ENCODE measurements at regions of chr10 and their contacts with region 1.

Region 1: GRCh38 chr10:50417886-50418830 is 166.8 kb upstream of the ASAH2 start:
- DNase-seq: peak; percentile 87
- H3K4me3 ChIP-seq: peak overlapping the region; percentile 45
- H3K4me3 Mint-ChIP-seq: peak overlapping the region; percentile 82
- H3K27ac Mint-ChIP-seq: peak overlapping the region; percentile 88
- H3K4me1 ChIP-seq: peaks cover 21% of the 10 kb centered on the region
- H3K4me1 Mint-ChIP-seq: peaks cover 36% of the 10 kb centered on the region
- H3K27me3 ChIP-seq: no peaks in the 10 kb centered on the region
- H3K27me3 Mint-ChIP-seq: no peaks in the 10 kb centered on the region
- CTCF ChIP-seq: no peak

Region 2: DNA sequence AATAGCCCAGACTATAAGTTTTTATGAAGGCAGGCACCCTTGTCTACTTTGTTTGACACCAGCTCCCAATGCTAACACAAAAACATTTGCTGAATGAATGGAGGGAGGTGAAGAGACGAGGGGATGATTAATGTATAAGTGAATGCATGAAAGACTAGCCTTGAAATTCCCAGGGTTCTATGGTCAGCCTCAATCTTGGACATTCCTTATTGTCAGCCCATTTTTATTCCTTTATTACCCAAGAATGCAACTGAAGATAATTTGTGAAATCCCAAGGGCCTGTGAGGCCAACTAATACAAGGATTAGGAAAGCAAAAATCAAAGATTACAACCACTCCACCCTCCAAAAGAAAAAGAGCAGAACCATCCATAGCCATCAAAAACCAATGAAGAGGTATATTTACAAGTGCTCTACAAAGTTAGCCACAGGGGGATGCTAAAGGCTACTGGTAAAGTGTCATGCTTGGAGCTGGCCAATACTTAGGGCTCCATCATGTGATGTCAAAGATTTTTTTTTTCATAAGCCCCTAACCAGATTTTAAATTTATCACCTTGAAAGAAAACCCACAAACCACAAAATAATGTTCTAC is 126.8 kb before region 1 on chr10:
- CTCF ChIA-PET with region 1: no interaction called
- POLR2A ChIA-PET with region 1: no interaction called
- intact Hi-C with region 1: loop called (anchors 2 kb)
- DNase-seq: no peak
- H3K4me3 ChIP-seq: no peak overlapping the region
- H3K4me3 Mint-ChIP-seq: no peak overlapping the region
- H3K27ac Mint-ChIP-seq: no peak overlapping the region
- H3K4me1 ChIP-seq: peaks cover 7% of the 10 kb centered on the region
- H3K4me1 Mint-ChIP-seq: no peaks in the 10 kb centered on the region
- H3K27me3 ChIP-seq: no peaks in the 10 kb centered on the region
- H3K27me3 Mint-ChIP-seq: peaks cover 5% of the 10 kb centered on the region
- CTCF ChIP-seq: peak in 1 of 2 experiments; percentile 26

Region 3: GRCh38 chr10:50367732-50368131 is 50.4 kb before region 1 on chr10:
- CTCF ChIA-PET with region 1: interaction called, 14 read pairs
- POLR2A ChIA-PET with region 1: interaction called, 5 read pairs
- intact Hi-C with region 1: loop called (anchors 1 kb)
- DNase-seq: peak; percentile 52 to 67
- H3K4me3 ChIP-seq: no peak overlapping the region
- H3K4me3 Mint-ChIP-seq: no peak overlapping the region
- H3K27ac Mint-ChIP-seq: no peak overlapping the region
- H3K4me1 ChIP-seq: 0 out of 2 replicates have a peak, but pooled peaks cover 3% of the 10 kb centered on the region
- H3K4me1 Mint-ChIP-seq: no peaks in the 10 kb centered on the region
- H3K27me3 ChIP-seq: no peaks in the 10 kb centered on the region
- H3K27me3 Mint-ChIP-seq: no peaks in the 10 kb centered on the region
- CTCF ChIP-seq: peak; percentile 70 to 83

Region 4: GRCh38 chr10:50385624-50386023 is 32.5 kb before region 1 on chr10:
- CTCF ChIA-PET with region 1: no interaction called
- POLR2A ChIA-PET with region 1: no interaction called
- intact Hi-C with region 1: loop called (anchors 5 kb)
- DNase-seq: no peak
- H3K4me3 ChIP-seq: no peak overlapping the region
- H3K4me3 Mint-ChIP-seq: no peak overlapping the region
- H3K27ac Mint-ChIP-seq: no peak overlapping the region
- H3K4me1 ChIP-seq: peaks cover 16% of the 10 kb centered on the region
- H3K4me1 Mint-ChIP-seq: peaks cover 23% of the 10 kb centered on the region
- H3K27me3 ChIP-seq: no peaks in the 10 kb centered on the region
- H3K27me3 Mint-ChIP-seq: no peaks in the 10 kb centered on the region
- CTCF ChIP-seq: no peak

Region 5: GRCh38 chr10:50395279-50395678 is 22.9 kb before region 1 on chr10:
- CTCF ChIA-PET with region 1: interaction called, 6 read pairs
- POLR2A ChIA-PET with region 1: no interaction called
- intact Hi-C with region 1: loop called (anchors 2 kb)
- DNase-seq: peak; percentile 48 to 61
- H3K4me3 ChIP-seq: no peak overlapping the region
- H3K4me3 Mint-ChIP-seq: no peak overlapping the region
- H3K27ac Mint-ChIP-seq: peak overlapping the region; percentile 72
- H3K4me1 ChIP-seq: peaks cover 87% of the 10 kb centered on the region
- H3K4me1 Mint-ChIP-seq: peaks cover 72% of the 10 kb centered on the region
- H3K27me3 ChIP-seq: no peaks in the 10 kb centered on the region
- H3K27me3 Mint-ChIP-seq: no peaks in the 10 kb centered on the region
- CTCF ChIP-seq: no peak

Region 6: GRCh38 chr10:50544857-50545429 is 126.8 kb after region 1 on chr10:
- CTCF ChIA-PET with region 1: no interaction called
- POLR2A ChIA-PET with region 1: interaction called, 3 read pairs
- intact Hi-C with region 1: loop called (anchors 5 kb)
- DNase-seq: no peak
- H3K4me3 ChIP-seq: no peak overlapping the region
- H3K4me3 Mint-ChIP-seq: peak overlapping the region; percentile 49
- H3K27ac Mint-ChIP-seq: peak overlapping the region; percentile 91
- H3K4me1 ChIP-seq: peaks cover 37% of the 10 kb centered on the region
- H3K4me1 Mint-ChIP-seq: peaks cover 28% of the 10 kb centered on the region
- H3K27me3 ChIP-seq: no peaks in the 10 kb centered on the region
- H3K27me3 Mint-ChIP-seq: no peaks in the 10 kb centered on the region
- CTCF ChIP-seq: no peak

Measured in Caco-2 (cell line).